ENCODE measurements at regions of chr12 and their contacts with region 1.

Region 1: GRCh38 chr12:55996715-55997534 is at the start of gene SUOX:
- DNase-seq: peak; percentile 96
- H3K4me3 ChIP-seq: peak within 1 kb of the TSS; percentile 85 to 97
- H3K27ac ChIP-seq: peak within 1 kb of the TSS; percentile 70 to 85
- H3K4me1 ChIP-seq: peaks cover 0 to 3% of the 10 kb centered on the region in 2 experiments; a peak in 1 of 4 replicates
- H3K27me3 ChIP-seq: no peaks in the 10 kb centered on the region
- CTCF ChIP-seq: no peak
- EP300 ChIP-seq: peak in 1 of 2 experiments; percentile 41; a peak in 1 of 4 replicates
- RAD21 ChIP-seq: no peak; the same call in 1 of the 2 replicates
- polyA plus RNA-seq, gene SUOX: 23.2 and 25.7 TPM in 2 replicates

Region 2: DNA sequence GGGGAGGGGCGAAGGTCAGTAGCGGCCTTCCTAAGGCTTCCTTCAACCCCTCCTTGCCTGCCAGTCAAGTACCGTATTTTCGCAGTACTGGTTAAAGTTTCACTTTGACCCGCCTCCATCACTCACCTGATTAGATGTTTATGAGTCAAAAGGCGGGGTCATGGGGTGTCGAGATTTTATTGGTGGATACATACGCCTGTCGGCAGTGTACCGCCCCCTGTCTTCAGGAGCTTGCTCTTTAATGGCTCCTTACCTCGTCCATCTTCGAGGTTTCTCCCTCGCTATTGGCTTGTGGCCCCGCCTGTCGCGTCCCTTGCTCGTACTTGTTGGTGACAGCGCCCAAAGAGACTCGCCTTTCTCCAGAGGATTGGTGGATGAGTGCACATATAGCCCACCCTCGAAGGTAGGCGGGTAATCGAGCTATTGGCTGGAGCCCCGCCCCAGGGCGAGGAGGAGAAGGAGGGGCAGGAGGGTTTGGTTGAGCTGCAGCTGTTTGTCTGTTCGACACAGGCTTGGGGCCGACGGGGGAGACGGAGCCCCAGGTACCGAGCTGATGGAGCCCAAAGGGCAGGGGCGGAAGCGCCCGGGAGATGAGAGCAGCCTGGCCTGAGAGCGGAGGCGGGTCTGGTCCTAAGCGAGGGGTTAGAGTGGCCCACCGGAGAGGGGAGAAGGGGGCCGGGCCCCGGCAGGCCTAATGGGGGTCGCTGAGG is 23.2 kb before region 1 on chr12 and contains the start of gene RAB5B:
- CTCF ChIA-PET with region 1: interaction called, 28 read pairs
- POLR2A ChIA-PET with region 1: interaction called, 3 read pairs
- DNase-seq: peak; percentile 94
- H3K4me3 ChIP-seq: peak within 1 kb of the TSS; percentile 69 to 94
- H3K27ac ChIP-seq: peak within 1 kb of the TSS; percentile 83 to 94
- H3K4me1 ChIP-seq: peaks cover 7% of the 10 kb centered on the region in 2 experiments; a peak in 3 of 4 replicates
- H3K27me3 ChIP-seq: no peaks in the 10 kb centered on the region
- CTCF ChIP-seq: no peak
- EP300 ChIP-seq: no peak
- RAD21 ChIP-seq: no peak
- polyA plus RNA-seq, gene RAB5B: 54.0 and 79.4 TPM in 2 replicates

Region 3: DNA sequence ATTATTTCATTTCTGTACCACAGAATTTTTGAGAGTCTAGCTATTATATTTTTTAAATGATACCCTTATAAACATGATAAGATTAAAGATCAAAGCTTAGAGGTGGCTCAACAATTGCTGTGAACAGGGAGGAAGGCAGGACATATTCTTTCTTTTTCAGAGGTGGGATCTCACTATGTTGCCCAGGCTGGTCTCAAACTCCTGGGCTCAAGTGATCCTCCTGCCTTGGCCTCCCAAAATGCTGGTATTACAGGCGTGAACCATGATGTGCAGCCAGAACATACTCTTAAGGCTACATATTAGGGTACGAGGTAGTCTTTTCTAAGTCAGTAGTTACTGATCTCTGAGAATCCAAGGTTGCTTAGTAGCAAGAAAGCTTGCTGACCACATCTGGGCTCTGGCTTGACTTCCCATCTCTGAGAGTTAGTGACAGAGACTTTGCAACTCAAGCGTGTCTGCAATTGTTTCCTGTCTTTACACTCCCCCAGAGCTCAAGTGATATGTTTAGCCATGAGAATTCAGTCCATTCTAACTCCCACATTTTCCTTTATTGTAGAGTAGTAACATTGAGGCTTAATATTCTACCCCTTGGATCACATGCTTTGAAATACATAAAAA is 14.5 kb before region 1 on chr12:
- CTCF ChIA-PET with region 1: interaction called, 50 read pairs
- POLR2A ChIA-PET with region 1: interaction called, 4 read pairs
- DNase-seq: no peak
- H3K4me3 ChIP-seq: no peak overlapping the region
- H3K27ac ChIP-seq: no peak overlapping the region
- H3K4me1 ChIP-seq: no peaks in the 10 kb centered on the region
- H3K27me3 ChIP-seq: no peaks in the 10 kb centered on the region
- CTCF ChIP-seq: no peak
- EP300 ChIP-seq: no peak
- RAD21 ChIP-seq: no peak

Region 4: GRCh38 chr12:56007564-56008559 is 10.9 kb after region 1 on chr12:
- CTCF ChIA-PET with region 1: interaction called, 30 read pairs
- POLR2A ChIA-PET with region 1: interaction called, 11 read pairs
- DNase-seq: peak; percentile 96
- H3K4me3 ChIP-seq: peak overlapping the region; percentile 66 to 72
- H3K27ac ChIP-seq: peak overlapping the region; percentile 52 to 88
- H3K4me1 ChIP-seq: peaks cover 0 to 8% of the 10 kb centered on the region in 2 experiments; a peak in 1 of 4 replicates
- H3K27me3 ChIP-seq: no peaks in the 10 kb centered on the region
- CTCF ChIP-seq: no peak
- EP300 ChIP-seq: no peak
- RAD21 ChIP-seq: no peak

Region 5: GRCh38 chr12:56014206-56014605 is 17.3 kb after region 1 on chr12:
- CTCF ChIA-PET with region 1: interaction called, 183 read pairs
- POLR2A ChIA-PET with region 1: no interaction called
- DNase-seq: no peak
- H3K4me3 ChIP-seq: no peak overlapping the region
- H3K27ac ChIP-seq: no peak overlapping the region
- H3K4me1 ChIP-seq: no peaks in the 10 kb centered on the region
- H3K27me3 ChIP-seq: no peaks in the 10 kb centered on the region
- CTCF ChIP-seq: no peak
- EP300 ChIP-seq: no peak
- RAD21 ChIP-seq: no peak

Region 6: GRCh38 chr12:56029666-56030293 is 32.9 kb after region 1 on chr12:
- CTCF ChIA-PET with region 1: interaction called, 183 read pairs
- POLR2A ChIA-PET with region 1: interaction called, 4 read pairs
- DNase-seq: peak; percentile 76
- H3K4me3 ChIP-seq: no peak overlapping the region
- H3K27ac ChIP-seq: peak overlapping the region in 1 of 2 experiments; percentile 54; a peak in 1 of 4 replicates
- H3K4me1 ChIP-seq: 0 out of 4 replicates have a peak, but pooled peaks cover 0 to 8% of the 10 kb centered on the region in 2 experiments
- H3K27me3 ChIP-seq: no peaks in the 10 kb centered on the region
- CTCF ChIP-seq: peak; percentile 86
- EP300 ChIP-seq: no peak
- RAD21 ChIP-seq: peak; percentile 75

Region 7: GRCh38 chr12:56041552-56042429 is 44.9 kb after region 1 on chr12 and contains the start of gene RPS26:
- CTCF ChIA-PET with region 1: interaction called, 46 read pairs
- POLR2A ChIA-PET with region 1: no interaction called
- DNase-seq: peak; percentile 89
- H3K4me3 ChIP-seq: peak within 1 kb of the TSS; percentile 81 to 93
- H3K27ac ChIP-seq: peak within 1 kb of the TSS; percentile 90 to 98
- H3K4me1 ChIP-seq: peaks cover 6 to 10% of the 10 kb centered on the region in 2 experiments
- H3K27me3 ChIP-seq: no peaks in the 10 kb centered on the region
- CTCF ChIP-seq: peak; percentile 50
- EP300 ChIP-seq: no peak
- RAD21 ChIP-seq: peak; percentile 71
- polyA plus RNA-seq, gene RPS26: 1,500 and 1,782 TPM in 2 replicates

Measured in SK-N-SH (cell line).